Sigmoid colon (tissue), 7 donors: ENCODE measurements at regions of chr15 and their contacts with region 1.

Region 1: GRCh38 chr15:101008158-101009139 is 89.3 kb downstream of the LRRK1 start:
- DNase-seq: peak; percentile 88
- H3K4me3 ChIP-seq: peak overlapping the region; percentile 25 to 48 (median 46)
- H3K27ac ChIP-seq: peak overlapping the region in 3 of 4 donors; percentile 53 to 62 (median 54)
- H3K4me1 ChIP-seq: peaks cover 0 to 20% (median 13%) of the 10 kb centered on the region in 4 donors
- H3K27me3 ChIP-seq: no peaks in the 10 kb centered on the region
- CTCF ChIP-seq: peak; percentile 78 to 99 (median 91)
- EP300 ChIP-seq: no peak
- POLR2A ChIP-seq: no peak

Region 2: GRCh38 chr15:100341662-100342560 is 666.5 kb before region 1 on chr15 and contains the start of gene ADAMTS17:
- intact Hi-C with region 1: loop called (anchors 5 kb)
- DNase-seq: peak; percentile 98
- H3K4me3 ChIP-seq: peak within 1 kb of the TSS; percentile 51 to 86 (median 78)
- H3K27ac ChIP-seq: peak within 1 kb of the TSS; percentile 69 to 87 (median 80)
- H3K4me1 ChIP-seq: peaks cover 0 to 23% (median 11%) of the 10 kb centered on the region in 4 donors
- H3K27me3 ChIP-seq: peaks cover 5 to 9% (median 8%) of the 10 kb centered on the region in 3 donors
- CTCF ChIP-seq: peak; percentile 88 to 94 (median 92)
- EP300 ChIP-seq: no peak
- POLR2A ChIP-seq: peak; percentile 33 to 73
- total RNA-seq, gene ADAMTS17: 0.71 to 3.6 (median 1.3) TPM

Region 3: GRCh38 chr15:100627789-100628395 is 380.6 kb before region 1 on chr15:
- intact Hi-C with region 1: loop called (anchors 2 kb)
- DNase-seq: peak; percentile 80
- H3K4me3 ChIP-seq: no peak overlapping the region
- H3K27ac ChIP-seq: no peak overlapping the region
- H3K4me1 ChIP-seq: peaks cover 0 to 14% (median 3%) of the 10 kb centered on the region in 4 donors
- H3K27me3 ChIP-seq: no peaks in the 10 kb centered on the region
- CTCF ChIP-seq: peak; percentile 65 to 81 (median 74)
- EP300 ChIP-seq: no peak
- POLR2A ChIP-seq: no peak

Region 4: DNA sequence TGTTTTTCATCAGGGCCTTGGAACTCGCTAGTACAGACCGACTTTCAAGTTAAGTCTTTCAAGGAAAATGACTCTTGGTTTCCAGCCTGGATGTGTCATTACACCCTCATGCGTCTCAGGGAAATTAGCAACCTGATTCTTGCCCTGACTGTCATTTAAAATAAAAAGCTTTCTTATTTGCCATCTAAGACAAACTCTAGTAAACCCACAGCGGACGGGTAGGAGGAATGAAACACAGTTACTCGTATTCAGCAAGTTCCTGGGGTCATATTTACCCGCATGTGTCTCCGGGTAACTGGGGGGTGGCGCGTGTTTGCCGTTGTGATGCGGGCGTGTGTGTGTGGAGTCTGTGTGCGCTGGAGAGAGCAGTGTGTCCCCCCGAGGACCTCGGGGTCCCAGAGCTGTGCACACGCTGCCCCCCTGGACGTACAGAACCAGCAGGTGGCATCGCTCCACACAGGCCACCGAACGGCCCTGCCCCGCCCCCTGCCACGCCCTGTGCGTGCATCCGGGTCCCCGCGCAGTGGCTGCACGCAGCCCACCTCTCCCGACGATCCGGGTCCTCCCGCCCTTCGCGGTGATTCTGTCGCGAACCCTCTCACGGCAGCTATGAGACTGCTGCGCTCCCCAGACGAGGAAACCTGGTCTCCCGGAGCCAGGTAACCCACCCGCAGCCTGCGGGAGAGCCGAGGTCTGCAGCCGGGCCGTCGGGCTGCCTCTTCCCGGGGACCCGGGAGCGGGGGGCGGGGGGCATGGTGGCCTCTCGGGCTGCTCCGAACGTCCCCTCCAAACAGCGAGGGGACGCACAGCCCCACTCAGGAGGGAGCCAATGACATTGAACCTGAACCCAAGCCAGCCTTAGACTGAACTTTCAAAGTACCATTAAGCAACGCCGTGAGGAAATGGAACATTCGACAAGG is 158.9 kb before region 1 on chr15:
- intact Hi-C with region 1: loop called (anchors 5 kb)
- DNase-seq: peak; percentile 77
- H3K4me3 ChIP-seq: peak overlapping the region; percentile 49 to 58 (median 55)
- H3K27ac ChIP-seq: peak overlapping the region in 3 of 4 donors; percentile 3 to 70 (median 61)
- H3K4me1 ChIP-seq: peaks cover 2 to 13% (median 6%) of the 10 kb centered on the region in 4 donors
- H3K27me3 ChIP-seq: no peaks in the 10 kb centered on the region
- CTCF ChIP-seq: no peak
- EP300 ChIP-seq: no peak
- POLR2A ChIP-seq: no peak

Region 5: GRCh38 chr15:100918034-100918689 is 90.3 kb before region 1 on chr15:
- intact Hi-C with region 1: loop called (anchors 1 kb)
- DNase-seq: peak; percentile 90
- H3K4me3 ChIP-seq: peak overlapping the region; percentile 61 to 87 (median 74)
- H3K27ac ChIP-seq: peak overlapping the region; percentile 65 to 77 (median 76)
- H3K4me1 ChIP-seq: peaks cover 0 to 35% (median 20%) of the 10 kb centered on the region in 4 donors
- H3K27me3 ChIP-seq: no peaks in the 10 kb centered on the region
- CTCF ChIP-seq: peak; percentile 73 to 92 (median 88)
- EP300 ChIP-seq: no peak
- POLR2A ChIP-seq: no peak

Region 6: GRCh38 chr15:101088788-101089583 is 80.5 kb after region 1 on chr15:
- intact Hi-C with region 1: no loop called
- DNase-seq: peak; percentile 82
- H3K4me3 ChIP-seq: peak overlapping the region in 3 of 4 donors; percentile 14 to 41 (median 38)
- H3K27ac ChIP-seq: peak overlapping the region in 1 of 4 donors; percentile 11
- H3K4me1 ChIP-seq: peaks cover 0 to 23% (median 8%) of the 10 kb centered on the region in 4 donors
- H3K27me3 ChIP-seq: no peaks in the 10 kb centered on the region
- CTCF ChIP-seq: peak; percentile 86 to 99 (median 96)
- EP300 ChIP-seq: no peak
- POLR2A ChIP-seq: no peak